ENCODE measurements at regions of chr11 and their contacts with region 1.

Region 1: GRCh38 chr11:6473481-6474422 is at the start of gene TRIM3:
- DNase-seq: peak; percentile 96
- ATAC-seq: peak; percentile 94
- total RNA-seq, gene TRIM3: 11.4 TPM

Region 2: DNA sequence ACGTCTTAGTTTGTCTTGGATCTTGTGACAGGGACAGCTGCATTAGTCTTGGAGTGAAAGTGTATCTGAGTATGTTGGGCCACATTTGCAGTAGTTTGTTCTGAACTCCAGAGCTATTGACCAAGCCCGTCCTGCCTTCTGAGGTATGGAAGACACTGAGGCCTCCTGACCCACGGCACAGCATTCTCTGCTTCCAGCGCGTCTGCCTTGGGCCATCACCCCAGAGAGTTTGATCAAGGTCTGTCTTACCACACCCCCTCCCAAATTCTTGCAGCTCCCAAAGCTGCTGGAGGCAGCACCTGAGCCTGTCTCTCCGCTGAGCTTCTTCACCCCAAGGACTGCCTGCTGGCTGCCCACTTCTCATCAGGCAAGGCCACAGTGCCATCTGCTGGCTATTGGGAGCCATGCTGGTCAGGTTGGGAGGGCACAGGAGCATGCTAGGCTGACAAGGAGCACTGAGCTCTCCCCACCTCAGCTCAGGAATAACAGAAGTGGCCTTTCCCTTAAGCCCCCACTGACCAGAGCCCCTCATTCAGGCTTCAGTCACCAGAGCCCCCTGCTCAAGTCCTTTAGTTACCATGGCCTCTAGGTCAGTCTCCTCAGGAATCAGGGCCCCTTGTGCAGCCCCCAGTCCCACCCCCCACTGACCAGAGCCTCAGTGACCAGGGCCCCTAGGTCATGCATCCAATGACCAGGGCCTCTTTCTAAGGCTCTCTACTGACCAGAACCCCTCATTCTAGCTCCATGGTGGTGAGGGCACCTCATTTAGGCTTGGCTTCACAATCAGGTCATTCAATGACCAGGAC is 110.7 kb before region 1 on chr11:
- intact Hi-C with region 1: no loop called
- DNase-seq: peak; percentile 87
- ATAC-seq: peak; percentile 95

Region 3: DNA sequence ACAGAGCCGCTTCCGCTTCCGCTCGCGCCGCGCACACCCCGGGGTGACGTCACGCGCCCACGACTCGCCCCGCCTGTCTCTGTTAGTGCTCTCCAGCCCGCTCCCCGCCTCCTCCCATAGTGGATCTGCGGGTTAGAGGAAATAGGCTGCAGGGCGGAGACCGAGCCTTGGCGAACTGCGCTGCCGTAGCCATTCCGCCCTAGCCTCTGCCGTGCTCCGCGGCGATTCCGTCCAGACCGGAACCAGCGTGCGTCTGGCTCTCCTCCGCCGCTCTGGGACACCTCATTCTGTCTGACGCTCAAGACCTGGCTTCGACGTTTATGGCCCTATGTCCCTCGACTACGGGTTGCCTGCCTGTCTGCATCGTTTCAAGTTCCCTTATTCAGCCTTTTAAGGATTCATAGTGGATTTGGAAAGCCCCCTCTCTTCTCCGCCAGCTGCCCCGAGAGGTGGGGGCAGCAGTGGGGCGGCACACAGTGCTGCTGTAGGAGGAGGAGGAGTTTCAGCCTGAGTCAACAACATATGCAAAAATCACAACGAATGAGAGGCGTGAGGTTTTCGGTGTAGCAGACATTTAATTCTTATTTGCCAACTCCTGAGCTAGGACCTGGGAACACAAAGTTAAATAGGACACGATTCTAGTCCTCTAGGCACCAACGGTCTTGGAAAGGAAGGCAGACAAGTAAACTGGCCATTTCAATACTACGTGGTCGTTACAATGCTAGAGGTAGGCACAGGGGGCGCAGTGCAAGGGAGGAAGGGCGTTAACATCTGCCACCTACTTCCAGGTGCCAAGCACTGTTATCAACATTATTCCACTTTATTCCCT is 138.7 kb after region 1 on chr11 and contains the start of gene TAF10:
- intact Hi-C with region 1: loop called (anchors 10 kb)
- DNase-seq: peak; percentile 99
- ATAC-seq: peak; percentile 96
- total RNA-seq, gene TAF10: 83.6 TPM

Measured in Right ventricle myocardium superior (tissue), 1 donor.